HEK293T (cell line): ENCODE measurements at regions of chr11 and their contacts with region 1.

Region 1: GRCh38 chr11:65013692-65014145 is 241 bp upstream of the ARL2 start:
- DNase-seq: peak; percentile 91

Region 2: GRCh38 chr11:64688534-64688982 is 325.2 kb before region 1 on chr11:
- CTCF ChIA-PET with region 1: no interaction called
- POLR2A ChIA-PET with region 1: no interaction called
- DNase-seq: peak; percentile 91

Region 3: DNA sequence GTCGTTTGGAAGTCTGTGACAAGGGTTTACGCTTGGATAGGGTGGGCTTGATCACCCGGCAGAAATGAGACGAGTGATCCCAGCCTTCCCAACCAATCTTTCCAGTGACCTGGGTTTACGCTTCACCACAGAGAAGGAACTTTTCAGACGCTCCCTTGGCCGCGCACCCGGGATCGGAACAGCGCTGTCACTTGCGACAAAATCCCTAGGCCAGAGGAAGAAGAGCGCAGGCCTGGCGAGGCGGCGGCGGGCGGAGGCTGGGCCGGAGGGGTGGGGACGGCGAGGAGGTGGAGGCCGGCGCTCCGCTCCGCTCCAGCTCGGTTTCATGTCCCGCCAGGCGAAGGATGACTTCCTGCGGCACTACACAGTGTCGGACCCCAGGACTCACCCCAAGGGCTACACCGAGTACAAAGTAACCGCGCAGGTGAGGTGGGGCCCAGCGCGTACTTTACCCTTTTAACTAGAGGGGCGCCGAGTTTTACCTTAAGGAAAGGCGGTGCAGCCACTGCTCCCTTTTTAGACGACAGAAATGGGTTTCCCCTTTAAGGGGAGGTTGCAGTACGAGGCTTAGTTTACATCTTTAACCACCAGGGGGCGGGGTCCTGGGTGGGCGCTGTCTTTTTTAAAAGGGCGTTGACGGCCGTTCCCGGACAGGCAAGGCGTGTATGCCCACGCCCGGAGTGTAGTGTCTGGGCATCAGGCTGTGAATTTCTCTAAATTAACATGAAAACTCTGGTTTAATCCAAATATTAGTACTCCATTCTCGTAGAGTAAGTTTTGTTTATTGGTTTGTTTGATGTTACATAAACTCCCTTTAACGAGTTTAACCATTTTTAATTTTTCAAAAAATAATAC is 13.7 kb after region 1 on chr11 and contains the start of gene SNX15:
- CTCF ChIA-PET with region 1: interaction called, 9 read pairs
- POLR2A ChIA-PET with region 1: interaction called, 11 read pairs
- DNase-seq: peak; percentile 87

Region 4: DNA sequence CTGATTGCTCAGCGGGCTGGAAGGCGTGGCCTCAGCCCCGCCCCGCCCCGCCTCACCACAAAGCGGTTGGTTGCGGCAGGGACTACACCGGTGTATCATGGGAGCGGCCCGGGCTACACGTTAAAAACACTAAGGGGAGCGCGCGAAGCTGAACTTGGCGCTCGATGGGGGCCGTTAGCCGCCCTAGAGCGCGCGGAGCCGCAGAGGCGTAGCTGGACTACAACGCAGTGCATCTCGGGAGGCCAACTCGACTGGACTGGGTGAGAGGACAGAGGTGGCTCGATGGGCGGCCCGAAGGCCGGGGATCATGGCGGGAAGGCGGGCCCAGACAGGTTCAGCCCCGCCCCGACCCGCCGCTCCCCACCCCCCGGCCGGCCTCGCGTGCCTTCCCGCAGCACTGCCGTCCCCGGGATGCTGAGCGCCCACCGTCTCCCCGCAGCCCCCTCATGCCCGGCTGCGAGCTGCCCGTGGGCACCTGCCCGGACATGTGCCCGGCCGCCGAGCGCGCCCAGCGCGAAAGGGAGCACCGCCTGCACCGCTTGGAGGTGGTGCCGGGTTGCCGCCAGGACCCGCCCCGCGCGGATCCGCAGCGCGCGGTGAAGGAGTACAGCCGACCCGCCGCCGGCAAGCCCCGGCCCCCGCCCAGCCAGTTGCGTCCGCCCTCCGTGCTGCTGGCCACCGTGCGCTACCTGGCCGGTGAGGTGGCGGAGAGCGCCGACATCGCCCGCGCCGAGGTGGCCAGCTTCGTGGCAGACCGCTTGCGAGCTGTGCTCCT is 27.3 kb after region 1 on chr11 and contains the start of gene SAC3D1:
- CTCF ChIA-PET with region 1: interaction called, 5 read pairs
- POLR2A ChIA-PET with region 1: interaction called, 14 read pairs
- DNase-seq: peak; percentile 91

Region 5: DNA sequence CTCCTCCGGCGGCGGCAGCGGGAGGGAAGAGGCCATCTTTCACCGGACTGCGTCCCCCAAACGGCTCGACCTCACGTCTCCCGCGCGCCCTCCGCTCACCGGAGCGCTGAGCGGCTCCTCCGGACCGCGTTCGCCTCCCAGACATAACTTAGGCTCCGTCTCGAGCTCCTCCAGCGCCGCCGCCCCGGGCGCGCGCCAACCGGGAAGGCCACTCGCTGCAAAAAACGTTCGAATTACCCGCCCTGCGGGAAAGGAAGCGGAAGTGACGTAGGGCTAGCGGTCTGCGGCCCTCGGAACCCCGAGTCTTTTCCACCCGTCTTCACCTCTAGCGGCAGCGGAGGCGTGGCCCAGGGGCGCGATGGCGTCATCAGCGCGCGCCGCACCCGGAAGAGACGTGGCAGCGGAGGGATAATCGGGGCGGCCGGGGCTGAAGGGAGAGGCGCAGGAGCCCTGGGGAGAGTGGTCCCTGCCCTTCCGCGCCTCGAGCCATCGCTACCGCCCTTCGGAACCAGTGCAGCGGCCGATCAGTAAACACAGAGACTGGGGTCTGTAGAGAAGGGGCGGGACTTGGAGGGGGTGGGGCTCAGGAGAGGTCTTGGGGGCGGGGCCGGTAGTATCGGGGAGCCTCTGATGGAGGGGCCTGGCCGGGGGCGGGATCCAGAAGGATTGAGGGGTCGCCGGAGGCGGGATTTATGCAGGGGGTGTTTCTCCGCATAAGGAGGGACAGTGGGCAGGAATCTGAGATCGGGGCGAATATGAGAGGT is 70.3 kb after region 1 on chr11 and contains the starts of genes CDCA5 and ZFPL1:
- CTCF ChIA-PET with region 1: interaction called, 6 read pairs
- POLR2A ChIA-PET with region 1: interaction called, 11 read pairs
- DNase-seq: peak; percentile 99